Colonic mucosa (tissue), 4 donors: ENCODE measurements at regions of chr14 and their contacts with region 1.

Region 1: GRCh38 chr14:94001501-94002396 is 4.6 kb downstream of the CCDC197 start:
- DNase-seq: peak; percentile 36
- H3K4me3 ChIP-seq: no peak overlapping the region
- H3K27ac ChIP-seq: no peak overlapping the region
- H3K4me1 ChIP-seq: no peaks in the 10 kb centered on the region
- H3K27me3 ChIP-seq: no peaks in the 10 kb centered on the region
- CTCF ChIP-seq: peak; percentile 94

Region 2: GRCh38 chr14:93939304-93940229 is 62.2 kb before region 1 on chr14:
- intact Hi-C with region 1: loop called (anchors 2 kb)
- DNase-seq: peak; percentile 85
- H3K4me3 ChIP-seq: peak overlapping the region; percentile 26
- H3K27ac ChIP-seq: no peak overlapping the region
- H3K4me1 ChIP-seq: no peaks in the 10 kb centered on the region
- H3K27me3 ChIP-seq: no peaks in the 10 kb centered on the region
- CTCF ChIP-seq: peak; percentile 86

Region 3: GRCh38 chr14:93959239-93960107 is 42.3 kb before region 1 on chr14:
- intact Hi-C with region 1: no loop called
- DNase-seq: peak; percentile 55
- H3K4me3 ChIP-seq: no peak overlapping the region
- H3K27ac ChIP-seq: peak overlapping the region; percentile 38
- H3K4me1 ChIP-seq: no peaks in the 10 kb centered on the region
- H3K27me3 ChIP-seq: no peaks in the 10 kb centered on the region
- CTCF ChIP-seq: no peak

Region 4: DNA sequence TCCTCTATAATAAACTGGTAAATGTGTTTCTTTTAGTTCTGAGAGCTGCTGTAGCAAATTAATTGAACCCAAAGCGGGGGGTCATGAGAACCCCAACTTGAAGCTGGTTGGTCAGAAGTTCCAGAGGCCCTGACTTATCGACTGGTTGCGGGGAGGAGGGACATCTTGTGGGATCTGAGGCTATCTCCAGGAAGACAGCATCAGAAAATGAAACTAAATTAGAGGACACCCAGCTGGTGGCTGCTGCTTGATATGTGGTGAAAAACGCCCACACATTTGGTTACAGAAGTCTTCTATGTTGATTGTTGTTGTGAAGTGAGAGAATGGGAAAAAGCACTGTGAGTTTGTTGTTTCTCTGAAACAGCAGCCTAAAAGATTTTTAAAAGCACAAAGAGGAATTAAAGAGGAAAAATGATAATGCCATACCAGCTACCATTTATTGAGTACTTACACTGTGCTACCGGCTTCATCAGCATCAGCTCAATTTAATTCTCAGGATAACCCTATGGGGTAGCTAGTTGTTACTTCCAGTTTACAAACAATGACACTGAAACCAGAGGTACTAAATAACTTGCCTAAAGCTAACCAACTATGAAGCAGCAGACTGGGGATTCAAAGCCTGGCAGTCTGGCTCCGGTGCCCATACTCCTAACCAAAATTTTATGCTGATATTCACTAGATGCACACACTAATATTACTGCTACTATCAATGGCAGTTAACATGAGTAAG is 55.0 kb after region 1 on chr14:
- intact Hi-C with region 1: no loop called
- DNase-seq: no peak
- H3K4me3 ChIP-seq: no peak overlapping the region
- H3K27ac ChIP-seq: no peak overlapping the region
- H3K4me1 ChIP-seq: peaks cover 9% of the 10 kb centered on the region
- H3K27me3 ChIP-seq: no peaks in the 10 kb centered on the region
- CTCF ChIP-seq: no peak